ENCODE measurements at regions of chr6 and their contacts with region 1.

Region 1: DNA sequence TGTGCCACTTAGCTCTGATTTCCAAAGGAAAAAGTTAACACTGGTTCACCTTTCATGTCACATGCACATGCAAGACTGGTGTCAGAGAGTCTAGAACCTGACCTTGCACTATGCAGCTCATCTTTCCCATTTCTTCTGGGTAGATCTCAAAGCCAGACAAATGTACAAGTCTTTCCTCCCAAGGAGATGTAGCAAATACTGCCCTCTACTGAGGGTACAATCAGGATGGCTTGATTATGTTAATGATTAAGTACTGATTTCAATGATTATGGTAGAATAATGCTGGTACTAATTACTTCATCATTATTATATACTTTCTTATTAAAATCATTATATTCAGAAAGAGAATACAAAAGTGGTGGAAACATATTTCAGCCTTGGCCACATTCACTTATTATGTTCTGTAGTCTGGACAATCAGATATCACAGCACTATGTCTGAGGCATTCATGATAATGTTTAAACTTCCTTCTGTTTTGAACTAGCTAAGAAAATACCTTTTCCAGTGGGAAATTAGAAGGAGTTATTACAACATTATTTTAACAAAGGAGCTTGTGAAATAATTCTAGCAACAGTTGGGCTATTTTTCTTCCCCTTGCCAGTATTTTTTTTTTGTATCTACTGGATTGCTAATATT is 68.5 kb upstream of the FOXO3 start:
- DNase-seq: peak; percentile 17
- H3K4me3 Mint-ChIP-seq: no peak overlapping the region
- H3K27ac Mint-ChIP-seq: no peak overlapping the region
- H3K4me1 Mint-ChIP-seq: no peaks in the 10 kb centered on the region
- H3K27me3 Mint-ChIP-seq: no peaks in the 10 kb centered on the region
- CTCF ChIP-seq: no peak

Region 2: GRCh38 chr6:108174371-108175175 is 317.7 kb before region 1 on chr6:
- CTCF ChIA-PET with region 1: no interaction called
- intact Hi-C with region 1: loop called (anchors 10 kb)
- DNase-seq: no peak
- H3K4me3 Mint-ChIP-seq: no peak overlapping the region
- H3K27ac Mint-ChIP-seq: no peak overlapping the region
- H3K4me1 Mint-ChIP-seq: no peaks in the 10 kb centered on the region
- H3K27me3 Mint-ChIP-seq: peaks cover 51% of the 10 kb centered on the region
- CTCF ChIP-seq: no peak

Region 3: DNA sequence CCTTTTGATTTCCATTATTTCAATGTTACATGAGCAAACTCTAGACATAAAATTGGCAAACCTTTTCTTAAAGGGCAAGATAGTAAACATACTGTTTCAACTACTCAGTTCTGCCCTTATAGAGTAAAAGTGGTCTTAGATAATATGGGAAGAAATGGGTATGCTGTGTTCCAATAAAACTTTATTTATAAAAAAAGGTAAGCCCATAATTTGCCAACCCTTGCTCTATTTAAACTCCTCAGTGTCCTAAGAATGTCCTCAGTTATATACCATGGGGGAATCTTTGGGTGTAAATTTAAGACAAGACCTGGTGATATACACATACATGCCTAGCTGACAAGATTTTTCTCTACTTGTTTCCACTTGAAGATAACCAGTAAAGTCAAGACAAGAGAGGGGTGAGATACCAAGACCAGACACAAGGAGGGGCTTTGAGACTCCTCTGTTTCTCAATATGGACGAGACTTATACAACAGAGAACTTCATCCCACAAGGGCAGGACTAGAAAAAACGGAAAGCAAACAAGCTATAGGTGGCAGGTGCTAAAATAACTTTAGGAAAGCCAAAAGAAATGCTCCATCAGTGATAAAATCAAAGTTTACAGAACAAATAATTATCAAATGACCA is 241.9 kb before region 1 on chr6:
- CTCF ChIA-PET with region 1: interaction called, 4 read pairs
- intact Hi-C with region 1: loop called (anchors 10 kb)
- DNase-seq: no peak
- H3K4me3 Mint-ChIP-seq: no peak overlapping the region
- H3K27ac Mint-ChIP-seq: no peak overlapping the region
- H3K4me1 Mint-ChIP-seq: peaks cover 17% of the 10 kb centered on the region
- H3K27me3 Mint-ChIP-seq: no peaks in the 10 kb centered on the region
- CTCF ChIP-seq: no peak

Region 4: GRCh38 chr6:108383984-108384383 is 108.3 kb before region 1 on chr6:
- CTCF ChIA-PET with region 1: no interaction called
- intact Hi-C with region 1: no loop called
- DNase-seq: no peak
- H3K4me3 Mint-ChIP-seq: no peak overlapping the region
- H3K27ac Mint-ChIP-seq: no peak overlapping the region
- H3K4me1 Mint-ChIP-seq: no peaks in the 10 kb centered on the region
- H3K27me3 Mint-ChIP-seq: no peaks in the 10 kb centered on the region
- CTCF ChIP-seq: no peak

Region 5: GRCh38 chr6:108510461-108511319 is 18.4 kb after region 1 on chr6:
- CTCF ChIA-PET with region 1: no interaction called
- intact Hi-C with region 1: no loop called
- DNase-seq: no peak
- H3K4me3 Mint-ChIP-seq: no peak overlapping the region
- H3K27ac Mint-ChIP-seq: no peak overlapping the region
- H3K4me1 Mint-ChIP-seq: no peaks in the 10 kb centered on the region
- H3K27me3 Mint-ChIP-seq: no peaks in the 10 kb centered on the region
- CTCF ChIP-seq: no peak

Region 6: DNA sequence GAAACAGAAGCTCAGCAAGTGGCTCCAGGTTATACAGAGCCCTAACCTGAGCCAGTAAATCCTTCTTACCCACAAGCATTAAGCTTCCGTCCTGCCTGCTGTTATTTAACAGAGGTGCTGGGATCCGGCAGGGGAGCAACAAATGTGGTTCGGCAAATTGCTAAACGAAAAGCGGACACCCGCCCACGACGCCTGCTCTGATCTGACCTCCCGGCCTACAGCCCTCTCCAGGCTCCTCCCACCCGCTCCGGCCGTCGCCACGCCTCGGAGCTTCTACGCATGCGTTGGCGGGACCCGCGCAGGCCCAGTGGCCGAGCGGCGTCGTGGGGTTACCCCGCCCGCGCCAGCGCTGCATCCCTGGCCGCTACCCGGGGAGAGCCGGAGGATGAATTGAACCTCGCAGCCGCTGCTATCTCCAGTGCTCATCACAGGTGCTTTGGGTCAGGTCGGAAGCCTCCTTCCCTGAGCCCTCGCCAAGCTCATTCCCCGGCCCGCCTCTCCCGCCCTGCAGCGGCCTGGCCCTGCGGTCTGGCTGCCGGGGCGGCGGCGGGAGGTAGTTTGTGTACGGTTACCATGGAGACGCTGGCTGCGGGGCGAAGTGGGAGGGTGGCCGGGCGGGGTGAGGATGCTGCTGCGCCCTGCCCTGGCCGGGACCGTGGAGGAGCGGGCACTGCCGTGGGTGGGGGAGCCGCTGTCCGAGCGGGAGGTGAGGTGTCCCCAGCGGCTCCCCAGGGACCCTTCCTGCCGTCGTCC is 356.0 kb after region 1 on chr6 and contains the start of gene ARMC2:
- CTCF ChIA-PET with region 1: no interaction called
- intact Hi-C with region 1: no loop called
- DNase-seq: peak; percentile 94
- H3K4me3 Mint-ChIP-seq: peak within 1 kb of the TSS; percentile 91
- H3K27ac Mint-ChIP-seq: peak within 1 kb of the TSS; percentile 23
- H3K4me1 Mint-ChIP-seq: peaks cover 14% of the 10 kb centered on the region
- H3K27me3 Mint-ChIP-seq: no peaks in the 10 kb centered on the region
- CTCF ChIP-seq: no peak
- total RNA-seq, gene ARMC2: 4.5 and 7.1 TPM in 2 replicates

Measured in Calu3 (cell line).